ENCODE measurements at regions of chr7 and their contacts with region 1.

Region 1: DNA sequence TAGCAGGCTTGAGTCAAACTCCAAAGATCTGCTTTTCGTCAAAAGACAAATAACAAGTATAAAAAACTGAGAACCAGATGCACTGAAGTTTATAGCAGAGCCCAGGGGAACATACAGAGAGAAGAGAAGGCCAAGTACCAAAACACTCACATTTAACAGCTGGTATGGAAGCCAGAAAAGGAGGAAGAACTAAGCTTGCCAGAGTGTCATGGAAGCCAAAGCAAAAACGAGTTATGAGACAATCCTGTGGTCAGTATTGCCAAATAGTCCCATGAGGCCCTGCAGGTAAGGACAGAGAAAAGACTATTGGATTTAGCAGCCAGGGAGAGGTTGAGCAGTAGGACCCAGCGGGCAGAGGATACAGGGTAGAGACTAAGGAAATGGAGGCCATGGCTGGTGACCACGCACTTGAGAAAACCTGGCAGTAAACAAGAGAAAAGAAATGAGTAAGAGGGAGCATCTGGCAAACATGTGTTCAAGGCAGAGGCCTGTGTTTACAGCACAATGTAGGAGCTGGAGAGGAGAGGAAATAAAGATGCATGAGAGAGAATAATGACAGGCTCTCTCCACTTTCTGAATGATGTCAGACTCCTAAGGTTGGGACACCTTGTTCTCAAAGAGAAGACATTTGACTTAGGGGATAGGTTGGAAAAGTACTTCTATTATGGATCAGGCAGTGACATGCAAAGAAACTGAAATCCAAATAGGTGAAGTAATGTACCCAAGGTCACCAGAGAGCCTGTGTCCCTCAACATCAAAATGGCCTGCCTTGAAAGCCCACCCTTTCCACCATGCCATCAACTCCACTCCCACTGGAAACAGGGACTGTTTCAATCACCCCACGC is 9.1 kb downstream of the CREB3L2 start:
- DNase-seq: peak; percentile 59 to 73 (median 71)
- H3K4me3 ChIP-seq: no peak overlapping the region
- H3K27ac ChIP-seq: peak overlapping the region; percentile 37 to 77
- H3K4me1 ChIP-seq: peaks cover 46% of the 10 kb centered on the region
- H3K27me3 ChIP-seq: no peaks in the 10 kb centered on the region
- CTCF ChIP-seq: no peak
- EP300 ChIP-seq: no peak
- POLR2A ChIP-seq: no peak

Region 2: GRCh38 chr7:137934941-137935883 is 57.6 kb before region 1 on chr7:
- intact Hi-C with region 1: loop called in 2 of 4 experiments (anchors 5 to 10 kb)
- DNase-seq: no peak
- H3K4me3 ChIP-seq: no peak overlapping the region
- H3K27ac ChIP-seq: no peak overlapping the region
- H3K4me1 ChIP-seq: peaks cover 23% of the 10 kb centered on the region
- H3K27me3 ChIP-seq: no peaks in the 10 kb centered on the region
- CTCF ChIP-seq: no peak
- EP300 ChIP-seq: no peak
- POLR2A ChIP-seq: no peak

Region 3: DNA sequence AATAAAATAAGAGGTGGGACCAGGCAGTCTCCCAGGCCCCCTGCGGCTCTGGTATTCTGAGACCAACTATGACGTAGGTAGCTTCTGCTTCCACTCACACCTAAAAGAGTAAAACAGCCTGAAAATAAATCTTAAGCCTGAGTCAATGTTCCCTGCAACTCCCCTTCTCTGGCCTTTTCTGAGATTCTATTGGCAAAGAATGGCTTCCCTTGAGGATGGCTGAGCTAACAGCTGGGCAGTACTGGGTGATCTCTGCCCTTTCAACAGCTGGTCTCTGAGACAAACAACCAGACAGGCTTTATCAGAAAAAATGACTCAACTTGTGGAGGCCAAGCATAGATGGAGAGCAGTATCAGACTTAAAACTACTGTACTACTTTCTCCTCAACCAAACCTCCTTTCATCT is 49.6 kb before region 1 on chr7:
- intact Hi-C with region 1: loop called in 2 of 4 experiments (anchors 5 to 10 kb)
- DNase-seq: peak; percentile 69 to 82 (median 77)
- H3K4me3 ChIP-seq: no peak overlapping the region
- H3K27ac ChIP-seq: peak overlapping the region in 1 of 2 donors; percentile 71
- H3K4me1 ChIP-seq: peaks cover 8% of the 10 kb centered on the region
- H3K27me3 ChIP-seq: no peaks in the 10 kb centered on the region
- CTCF ChIP-seq: no peak
- EP300 ChIP-seq: no peak
- POLR2A ChIP-seq: no peak

Region 4: DNA sequence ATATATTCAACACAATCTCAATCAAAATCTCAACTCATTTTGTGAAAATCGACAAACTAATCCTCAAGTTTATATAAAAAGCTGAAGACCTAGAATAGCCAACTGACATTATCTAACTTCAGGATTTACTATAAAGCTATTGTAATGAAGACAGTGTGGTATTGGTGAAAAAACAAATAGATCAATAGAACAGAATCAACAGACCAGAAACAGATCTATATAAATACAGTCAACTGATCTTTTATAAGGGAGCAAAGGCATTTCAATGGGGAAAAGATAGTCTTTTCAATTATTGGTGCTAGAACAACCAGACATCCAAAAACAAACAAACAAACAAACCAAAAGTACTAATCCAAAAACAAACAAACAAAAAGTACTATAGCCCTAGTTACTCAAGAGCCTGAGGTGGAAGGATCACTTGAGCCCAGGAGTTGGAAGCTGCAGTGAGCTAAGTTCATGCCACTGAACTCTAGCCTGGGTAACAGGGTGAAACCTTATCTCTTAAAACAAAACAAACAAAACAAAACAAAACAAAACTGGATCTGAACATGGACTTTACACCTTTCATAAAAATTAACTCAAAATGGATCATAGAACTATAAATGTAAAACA is 56.8 kb after region 1 on chr7:
- intact Hi-C with region 1: no loop called
- DNase-seq: no peak
- H3K4me3 ChIP-seq: no peak overlapping the region
- H3K27ac ChIP-seq: no peak overlapping the region
- H3K4me1 ChIP-seq: no peaks in the 10 kb centered on the region
- H3K27me3 ChIP-seq: no peaks in the 10 kb centered on the region
- CTCF ChIP-seq: no peak
- EP300 ChIP-seq: no peak
- POLR2A ChIP-seq: no peak

Measured in ovary (tissue), 10 donors.